ENCODE measurements at regions of chr9 and their contacts with region 1.

Region 1: DNA sequence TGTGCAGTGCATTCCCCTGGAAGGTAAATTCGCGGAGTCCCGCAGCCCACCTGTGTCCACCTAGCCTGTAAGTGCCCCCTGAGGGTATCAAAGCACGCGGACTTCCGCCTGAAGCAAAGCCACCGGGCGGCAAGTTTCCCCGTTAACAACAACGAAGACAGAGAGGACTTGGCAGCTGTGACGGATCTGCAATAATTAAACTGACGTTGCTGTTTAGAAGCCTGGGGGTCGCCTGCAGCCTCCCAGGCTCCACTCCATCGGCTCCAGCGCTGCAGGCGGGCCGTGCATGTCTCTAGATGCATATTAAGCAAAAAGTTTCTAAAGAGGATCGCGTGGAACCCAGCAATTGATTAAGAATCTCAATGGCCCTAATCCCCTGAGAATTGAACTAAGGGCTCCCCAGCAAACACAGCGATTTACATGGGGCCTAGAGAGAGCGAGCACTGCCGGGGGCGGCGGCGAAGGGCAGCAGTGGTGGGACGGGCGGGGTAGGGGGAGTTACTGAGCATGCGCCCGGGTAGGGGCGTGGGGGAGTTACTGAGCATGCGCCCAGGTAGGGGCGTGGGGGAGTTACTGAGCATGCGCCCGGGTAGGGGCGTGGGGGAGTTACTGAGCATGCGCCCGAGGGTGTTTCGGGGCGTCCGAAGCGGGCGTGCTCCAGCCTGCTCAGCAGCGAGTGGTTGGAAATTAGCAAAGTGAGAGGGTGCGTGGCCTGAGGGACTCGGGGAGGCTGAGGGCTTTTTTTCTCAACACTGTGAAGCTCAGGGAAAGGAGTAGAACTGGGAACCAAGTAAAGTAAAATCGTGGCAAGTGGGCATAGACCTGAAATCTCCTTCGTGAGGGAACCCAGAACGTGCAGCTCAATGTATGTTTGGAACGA is 255.2 kb downstream of the DOCK8 start:
- DNase-seq: peak; percentile 82 to 92 (median 89)
- ATAC-seq: peak; percentile 93
- H3K4me3 ChIP-seq: peak overlapping the region; percentile 84
- H3K4me3 Mint-ChIP-seq: peak overlapping the region; percentile 92 to 99 (median 97)
- H3K27ac ChIP-seq: peak overlapping the region; percentile 75
- H3K27ac Mint-ChIP-seq: peak overlapping the region; percentile 88 to 99 (median 94)
- H3K4me1 ChIP-seq: peaks cover 0 to 6% of the 10 kb centered on the region in 2 donors
- H3K4me1 Mint-ChIP-seq: peaks cover 17 to 32% (median 27%) of the 10 kb centered on the region in 7 donors
- H3K27me3 ChIP-seq: no peaks in the 10 kb centered on the region
- H3K27me3 Mint-ChIP-seq: no peaks in the 10 kb centered on the region

Region 2: DNA sequence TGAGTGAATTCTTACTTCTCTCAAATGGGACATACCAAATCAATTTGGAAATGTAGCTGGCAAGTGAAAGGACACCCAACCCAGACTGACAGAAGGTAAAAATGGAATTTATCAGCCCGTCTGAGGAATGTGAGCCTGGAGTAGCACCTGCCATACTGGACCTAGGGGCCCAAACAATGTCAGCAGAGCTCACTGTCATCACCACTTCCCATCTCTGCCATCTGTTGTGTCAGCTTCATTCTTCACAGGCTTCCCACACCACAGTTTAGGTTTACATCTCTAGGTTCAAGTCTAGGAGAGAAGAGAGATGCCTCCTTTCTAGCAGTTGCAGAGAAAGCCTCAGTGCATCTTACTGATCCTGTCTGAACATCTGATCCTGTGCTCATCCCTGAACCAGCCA is 32.9 kb before region 1 on chr9:
- CTCF ChIA-PET with region 1: no interaction called
- POLR2A ChIA-PET with region 1: no interaction called
- intact Hi-C with region 1: no loop called
- DNase-seq: no peak
- ATAC-seq: no peak
- H3K4me3 ChIP-seq: no peak overlapping the region
- H3K4me3 Mint-ChIP-seq: peak overlapping the region in 1 of 10 donors; percentile 30
- H3K27ac ChIP-seq: no peak overlapping the region
- H3K27ac Mint-ChIP-seq: peak overlapping the region in 5 of 9 donors; percentile 23 to 77 (median 53)
- H3K4me1 ChIP-seq: no peaks in the 10 kb centered on the region
- H3K4me1 Mint-ChIP-seq: peaks cover 0 to 7% (median 0%) of the 10 kb centered on the region in 7 donors
- H3K27me3 ChIP-seq: no peaks in the 10 kb centered on the region
- H3K27me3 Mint-ChIP-seq: no peaks in the 10 kb centered on the region

Region 3: GRCh38 chr9:503881-504852 is 34.3 kb after region 1 on chr9:
- CTCF ChIA-PET with region 1: interaction called, 5 read pairs
- POLR2A ChIA-PET with region 1: interaction called, 18 read pairs
- intact Hi-C with region 1: loop called (anchors 1 kb)
- DNase-seq: peak; percentile 66 to 86 (median 82)
- ATAC-seq: peak; percentile 90
- H3K4me3 ChIP-seq: peak within 1 kb of the TSS; percentile 74
- H3K4me3 Mint-ChIP-seq: peak within 1 kb of the TSS; percentile 81 to 96 (median 90)
- H3K27ac ChIP-seq: peak within 1 kb of the TSS; percentile 56
- H3K27ac Mint-ChIP-seq: peak within 1 kb of the TSS; percentile 59 to 95 (median 88)
- H3K4me1 ChIP-seq: peaks cover 0 to 9% of the 10 kb centered on the region in 2 donors
- H3K4me1 Mint-ChIP-seq: peaks cover 7 to 32% (median 24%) of the 10 kb centered on the region in 7 donors
- H3K27me3 ChIP-seq: peaks cover 0 to 4% of the 10 kb centered on the region in 2 donors
- H3K27me3 Mint-ChIP-seq: peaks cover 0 to 54% (median 13%) of the 10 kb centered on the region in 5 donors

Region 4: GRCh38 chr9:522658-523057 is 52.7 kb after region 1 on chr9:
- CTCF ChIA-PET with region 1: no interaction called
- POLR2A ChIA-PET with region 1: no interaction called
- intact Hi-C with region 1: no loop called
- DNase-seq: no peak
- ATAC-seq: no peak
- H3K4me3 ChIP-seq: no peak overlapping the region
- H3K4me3 Mint-ChIP-seq: no peak overlapping the region
- H3K27ac ChIP-seq: no peak overlapping the region
- H3K27ac Mint-ChIP-seq: peak overlapping the region in 5 of 9 donors; percentile 44 to 81 (median 68)
- H3K4me1 ChIP-seq: peaks cover 0 to 11% of the 10 kb centered on the region in 2 donors
- H3K4me1 Mint-ChIP-seq: peaks cover 4 to 40% (median 20%) of the 10 kb centered on the region in 7 donors
- H3K27me3 ChIP-seq: no peaks in the 10 kb centered on the region
- H3K27me3 Mint-ChIP-seq: no peaks in the 10 kb centered on the region

Measured in naive thymus-derived CD4-positive, alpha-beta T cell (primary cell).